Aorta (tissue), 5 donors: ENCODE measurements at regions of chr9 and their contacts with region 1.

Region 1: GRCh38 chr9:123739387-123739786 is 190.5 kb downstream of the DENND1A start:
- DNase-seq: no peak
- ATAC-seq: no peak
- H3K4me3 ChIP-seq: no peak overlapping the region
- H3K27ac ChIP-seq: no peak overlapping the region
- H3K4me1 ChIP-seq: no peaks in the 10 kb centered on the region
- H3K27me3 ChIP-seq: no peaks in the 10 kb centered on the region

Region 2: GRCh38 chr9:124270504-124271335 is 531.3 kb after region 1 on chr9:
- intact Hi-C with region 1: loop called in 1 of 2 experiments (anchors 10 kb)
- DNase-seq: peak; percentile 86 to 87
- ATAC-seq: peak; percentile 52
- H3K4me3 ChIP-seq: no peak overlapping the region
- H3K27ac ChIP-seq: peak overlapping the region in 1 of 2 donors; percentile 57
- H3K4me1 ChIP-seq: peaks cover 7 to 8% of the 10 kb centered on the region in 2 donors
- H3K27me3 ChIP-seq: no peaks in the 10 kb centered on the region